ENCODE measurements at regions of chr14 and their contacts with region 1.

Region 1: DNA sequence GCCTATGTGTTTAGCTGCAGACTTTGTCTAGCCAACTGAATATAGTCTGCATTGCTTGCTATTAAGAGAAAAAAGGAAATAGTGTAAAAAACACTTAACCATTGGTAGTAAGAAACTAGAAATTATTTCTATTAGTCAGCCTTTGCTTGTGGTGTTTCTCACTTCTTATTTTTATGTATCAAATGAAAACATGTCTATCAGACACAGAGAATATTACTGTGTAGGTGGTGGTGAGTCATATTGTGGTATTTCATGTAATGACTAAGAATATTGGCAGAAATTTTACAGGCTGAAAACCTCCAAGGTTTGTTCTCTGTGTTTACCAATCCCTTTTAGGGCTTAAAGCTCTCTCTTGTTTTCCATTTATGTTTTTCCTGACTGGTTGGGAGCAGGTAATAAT is 87.2 kb downstream of the DAAM1 start:
- DNase-seq: peak; percentile 100
- ATAC-seq: peak; percentile 75
- H3K4me3 ChIP-seq: peak overlapping the region; percentile 23
- H3K27ac ChIP-seq: peak overlapping the region; percentile 64
- H3K4me1 ChIP-seq: peaks cover 60% of the 10 kb centered on the region
- H3K27me3 ChIP-seq: no peaks in the 10 kb centered on the region
- CTCF ChIP-seq: no peak

Region 2: DNA sequence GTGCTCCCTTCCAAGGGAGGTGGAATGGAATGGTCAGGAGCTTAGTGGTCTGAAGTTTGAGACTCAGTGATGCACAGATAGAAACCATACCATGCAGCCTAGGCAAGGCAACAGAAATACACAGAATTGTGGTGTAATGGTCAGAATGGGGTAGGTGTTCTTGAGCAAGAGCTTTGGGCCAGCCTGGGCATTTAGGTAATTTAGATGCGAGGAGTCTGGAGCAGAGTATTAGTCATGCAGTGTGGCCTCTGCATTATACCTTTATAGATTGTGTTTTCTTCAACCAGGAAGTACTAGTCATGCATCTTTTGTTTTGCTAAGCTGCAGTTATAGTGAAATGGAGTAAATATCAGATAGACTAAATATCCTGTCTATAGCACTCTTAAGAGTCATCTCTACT is 31.1 kb after region 1 on chr14:
- CTCF ChIA-PET with region 1: interaction called, 3 read pairs
- POLR2A ChIA-PET with region 1: interaction called, 3 read pairs
- intact Hi-C with region 1: loop called (anchors 1 kb)
- DNase-seq: peak; percentile 99
- ATAC-seq: peak; percentile 91
- H3K4me3 ChIP-seq: peak overlapping the region; percentile 3; the same call in 1 of the 2 replicates
- H3K27ac ChIP-seq: peak overlapping the region; percentile 39
- H3K4me1 ChIP-seq: peaks cover 49% of the 10 kb centered on the region
- H3K27me3 ChIP-seq: no peaks in the 10 kb centered on the region
- CTCF ChIP-seq: no peak

Region 3: GRCh38 chr14:59389936-59390335 is 114.3 kb after region 1 on chr14:
- CTCF ChIA-PET with region 1: no interaction called
- POLR2A ChIA-PET with region 1: no interaction called
- intact Hi-C with region 1: no loop called
- DNase-seq: no peak
- ATAC-seq: no peak
- H3K4me3 ChIP-seq: no peak overlapping the region
- H3K27ac ChIP-seq: no peak overlapping the region
- H3K4me1 ChIP-seq: no peaks in the 10 kb centered on the region
- H3K27me3 ChIP-seq: no peaks in the 10 kb centered on the region
- CTCF ChIP-seq: no peak